ENCODE measurements at regions of chr5 and their contacts with region 1.

Region 1: DNA sequence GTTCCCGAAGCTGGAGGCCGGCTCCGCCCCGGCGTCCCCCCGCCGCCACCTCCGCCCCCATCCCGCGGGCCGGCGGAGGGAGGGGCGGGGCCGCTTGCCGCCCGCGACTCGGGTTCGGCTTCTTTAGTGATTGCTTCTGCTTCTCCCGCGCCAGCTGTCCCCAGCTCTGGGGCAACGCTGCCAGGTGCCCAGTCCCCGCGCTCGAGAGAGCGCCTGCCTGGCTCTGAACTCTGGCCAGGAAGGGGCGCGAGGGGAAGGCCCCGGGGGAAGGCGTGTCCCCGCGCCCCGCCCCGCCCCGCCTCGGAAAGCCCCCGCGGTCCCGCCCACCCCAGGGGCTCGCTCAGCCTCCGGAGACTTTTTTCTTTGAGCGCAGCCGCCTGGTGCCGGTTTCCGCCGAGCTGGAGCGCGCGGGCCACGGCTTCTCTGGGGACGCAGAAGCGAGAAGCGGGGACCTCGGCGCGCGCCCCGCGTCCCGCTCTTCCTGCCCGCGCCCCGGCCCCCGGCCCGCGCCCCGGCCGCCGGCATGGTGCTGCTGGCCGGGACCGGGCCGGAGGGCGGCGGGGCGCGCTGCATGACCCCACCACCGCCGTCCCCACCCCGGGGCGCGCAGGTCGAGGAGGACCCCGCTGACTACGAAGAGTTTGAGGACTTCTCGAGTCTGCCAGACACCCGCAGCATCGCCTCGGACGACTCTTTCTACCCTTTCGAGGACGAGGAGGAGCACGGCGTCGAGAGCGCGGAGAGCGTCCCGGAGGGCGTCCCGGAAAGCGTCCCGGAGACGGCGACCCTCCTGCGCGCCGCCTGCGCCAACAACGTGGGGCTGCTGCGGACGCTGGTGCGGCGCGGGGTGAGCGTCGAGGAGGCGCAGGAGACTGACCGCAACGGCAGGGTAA is at the start of gene ANKRD33B:
- DNase-seq: peak; percentile 84
- ATAC-seq: peak; percentile 72
- H3K4me3 Mint-ChIP-seq: peak within 1 kb of the TSS; percentile 97
- H3K27ac Mint-ChIP-seq: peak within 1 kb of the TSS; percentile 93
- H3K4me1 Mint-ChIP-seq: peaks cover 65% of the 10 kb centered on the region
- H3K27me3 Mint-ChIP-seq: no peaks in the 10 kb centered on the region
- CTCF ChIP-seq: no peak
- total RNA-seq, gene ANKRD33B: 156 and 170 TPM in 2 replicates

Region 2: DNA sequence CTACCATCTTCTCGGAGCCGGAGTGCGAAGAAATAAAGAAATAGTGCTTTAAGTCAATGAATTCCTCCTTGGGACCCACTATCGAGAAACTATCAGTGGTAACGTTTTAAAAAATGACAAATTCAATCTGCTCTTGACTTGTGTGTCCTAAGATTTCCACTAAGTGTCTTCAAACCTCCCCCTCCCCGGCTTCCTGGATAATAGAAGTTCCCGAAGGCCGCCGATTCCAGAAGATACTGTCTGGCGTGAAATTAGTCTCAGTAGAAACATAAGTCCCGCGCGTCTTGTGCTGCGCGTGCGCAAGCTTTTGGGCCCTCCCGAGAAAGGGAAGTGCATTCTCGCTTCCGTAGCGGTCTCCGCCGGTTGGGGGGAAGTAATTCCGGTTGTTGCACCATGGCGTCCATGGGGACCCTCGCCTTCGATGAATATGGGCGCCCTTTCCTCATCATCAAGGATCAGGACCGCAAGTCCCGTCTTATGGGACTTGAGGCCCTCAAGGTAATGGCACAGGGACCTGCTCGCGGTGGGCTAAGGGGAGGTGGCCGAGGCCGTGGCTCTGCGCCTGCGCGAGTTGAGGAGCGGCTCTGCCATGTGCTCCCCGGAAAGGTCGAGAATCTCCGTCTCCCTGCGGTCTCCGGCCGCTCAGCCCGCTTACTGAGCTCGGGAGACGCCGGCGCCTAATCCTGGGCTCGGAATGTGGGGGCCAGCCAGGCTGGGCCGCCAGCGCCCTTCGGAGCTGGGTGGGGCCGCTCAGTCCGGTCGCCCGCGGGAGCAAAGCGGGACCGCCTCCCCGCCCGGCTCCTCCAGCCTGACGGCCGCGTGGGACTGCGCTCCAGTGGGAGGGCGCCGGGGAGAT is 314.0 kb before region 1 on chr5 and contains the start of gene CCT5:
- CTCF ChIA-PET with region 1: no interaction called
- POLR2A ChIA-PET with region 1: interaction called, 9 read pairs
- intact Hi-C with region 1: loop called (anchors 2 kb)
- DNase-seq: peak; percentile 80
- ATAC-seq: peak; percentile 80
- H3K4me3 Mint-ChIP-seq: peak within 1 kb of the TSS; percentile 98
- H3K27ac Mint-ChIP-seq: peak within 1 kb of the TSS; percentile 99
- H3K4me1 Mint-ChIP-seq: peaks cover 52% of the 10 kb centered on the region
- H3K27me3 Mint-ChIP-seq: no peaks in the 10 kb centered on the region
- CTCF ChIP-seq: no peak
- total RNA-seq, gene CCT5: 203 and 213 TPM in 2 replicates

Region 3: DNA sequence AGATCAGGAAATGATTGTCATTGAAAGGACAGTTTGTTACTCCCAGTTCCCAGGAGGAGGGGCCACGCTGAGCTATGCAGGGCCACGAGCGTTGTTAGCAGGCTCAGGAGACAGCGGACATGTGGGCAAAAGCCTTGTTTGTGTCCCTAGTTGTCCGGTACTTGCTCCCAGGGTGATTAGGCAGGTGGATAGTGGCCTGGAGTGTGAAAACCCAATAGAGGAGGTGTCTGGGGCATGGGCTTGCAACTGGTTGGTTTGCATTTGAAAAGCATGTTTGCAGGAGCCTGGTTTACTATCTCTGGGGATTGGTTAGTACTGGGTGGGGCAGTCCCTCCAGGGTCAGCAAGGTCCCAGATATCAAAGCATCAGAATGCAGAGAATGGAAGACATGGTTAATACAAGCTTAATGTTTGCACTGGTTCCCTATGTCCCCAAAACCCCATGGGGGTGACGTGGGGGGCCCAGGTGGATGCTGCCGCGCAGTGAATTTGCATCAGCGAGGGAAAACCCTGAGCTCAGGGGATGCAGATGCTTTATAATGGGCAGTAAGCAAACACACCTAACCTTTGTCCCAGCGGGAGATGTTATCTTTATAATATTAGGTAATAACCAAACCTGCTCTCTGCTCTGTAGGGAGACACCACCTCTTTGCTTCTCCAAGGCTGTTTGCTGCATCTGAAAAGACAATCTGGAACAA is 82.8 kb before region 1 on chr5:
- CTCF ChIA-PET with region 1: interaction called, 3 read pairs
- POLR2A ChIA-PET with region 1: interaction called, 12 read pairs
- intact Hi-C with region 1: no loop called
- DNase-seq: no peak
- ATAC-seq: peak; percentile 80
- H3K4me3 Mint-ChIP-seq: no peak overlapping the region
- H3K27ac Mint-ChIP-seq: no peak overlapping the region
- H3K4me1 Mint-ChIP-seq: peaks cover 24% of the 10 kb centered on the region
- H3K27me3 Mint-ChIP-seq: peaks cover 1% of the 10 kb centered on the region
- CTCF ChIP-seq: no peak

Region 4: GRCh38 chr5:10536931-10537579 is 27.1 kb before region 1 on chr5:
- CTCF ChIA-PET with region 1: no interaction called
- POLR2A ChIA-PET with region 1: interaction called, 9 read pairs
- intact Hi-C with region 1: loop called (anchors 1 kb)
- DNase-seq: no peak
- ATAC-seq: peak; percentile 79
- H3K4me3 Mint-ChIP-seq: peak overlapping the region; percentile 76
- H3K27ac Mint-ChIP-seq: peak overlapping the region; percentile 75
- H3K4me1 Mint-ChIP-seq: peaks cover 26% of the 10 kb centered on the region
- H3K27me3 Mint-ChIP-seq: peaks cover 2% of the 10 kb centered on the region
- CTCF ChIP-seq: no peak

Region 5: GRCh38 chr5:10601246-10602030 is 37.2 kb after region 1 on chr5:
- CTCF ChIA-PET with region 1: interaction called, 3 read pairs
- POLR2A ChIA-PET with region 1: interaction called, 27 read pairs
- intact Hi-C with region 1: loop called (anchors 1 kb)
- DNase-seq: no peak
- ATAC-seq: peak; percentile 63
- H3K4me3 Mint-ChIP-seq: peak overlapping the region; percentile 72
- H3K27ac Mint-ChIP-seq: peak overlapping the region; percentile 84
- H3K4me1 Mint-ChIP-seq: peaks cover 66% of the 10 kb centered on the region
- H3K27me3 Mint-ChIP-seq: no peaks in the 10 kb centered on the region
- CTCF ChIP-seq: no peak

Region 6: DNA sequence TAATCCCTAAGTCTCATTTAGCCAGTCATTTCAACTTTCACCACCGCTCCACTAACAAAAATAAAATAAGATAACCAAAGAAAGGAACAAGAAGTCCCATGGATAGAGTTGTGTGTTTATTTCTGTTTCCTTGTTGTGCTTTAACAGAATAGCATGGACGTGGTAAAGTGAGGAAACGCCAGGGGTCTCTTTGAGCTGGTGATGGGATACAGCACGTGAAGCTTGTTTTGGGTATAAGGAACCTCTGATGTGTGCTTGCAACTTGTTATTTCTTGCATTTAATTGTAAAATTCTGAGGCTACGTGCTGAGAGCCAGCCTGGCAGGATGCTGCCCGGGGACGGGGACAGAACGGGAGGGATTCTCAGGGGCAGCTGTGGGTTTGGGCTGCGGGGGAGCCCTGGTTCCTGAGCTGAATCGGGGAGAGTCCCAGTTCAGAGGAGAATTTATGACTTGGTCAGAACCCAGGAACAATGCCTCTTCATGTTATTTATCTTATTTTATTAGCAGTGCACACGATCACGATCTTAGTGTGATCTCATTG is 63.0 kb after region 1 on chr5:
- CTCF ChIA-PET with region 1: interaction called, 23 read pairs
- POLR2A ChIA-PET with region 1: interaction called, 158 read pairs
- intact Hi-C with region 1: loop called (anchors 1 kb)
- DNase-seq: no peak
- ATAC-seq: no peak
- H3K4me3 Mint-ChIP-seq: peak overlapping the region; percentile 80
- H3K27ac Mint-ChIP-seq: peak overlapping the region; percentile 85
- H3K4me1 Mint-ChIP-seq: peaks cover 68% of the 10 kb centered on the region
- H3K27me3 Mint-ChIP-seq: no peaks in the 10 kb centered on the region
- CTCF ChIP-seq: no peak

Region 7: GRCh38 chr5:10701567-10702039 is 137.4 kb after region 1 on chr5:
- CTCF ChIA-PET with region 1: no interaction called
- POLR2A ChIA-PET with region 1: interaction called, 4 read pairs
- intact Hi-C with region 1: loop called (anchors 5 kb)
- DNase-seq: no peak
- ATAC-seq: peak; percentile 26
- H3K4me3 Mint-ChIP-seq: no peak overlapping the region
- H3K27ac Mint-ChIP-seq: no peak overlapping the region
- H3K4me1 Mint-ChIP-seq: peaks cover 58% of the 10 kb centered on the region
- H3K27me3 Mint-ChIP-seq: no peaks in the 10 kb centered on the region
- CTCF ChIP-seq: no peak